CD4-positive, alpha-beta memory T cell (primary cell): ENCODE measurements at regions of chr3 and their contacts with region 1.

Region 1: GRCh38 chr3:96548073-96548472 is 266.3 kb upstream of the EPHA6 start:
- DNase-seq: no peak
- H3K4me3 ChIP-seq: no peak overlapping the region
- H3K4me3 Mint-ChIP-seq: no peak overlapping the region
- H3K27ac ChIP-seq: no peak overlapping the region
- H3K27ac Mint-ChIP-seq: no peak overlapping the region
- H3K4me1 ChIP-seq: no peaks in the 10 kb centered on the region
- H3K4me1 Mint-ChIP-seq: no peaks in the 10 kb centered on the region
- H3K27me3 ChIP-seq: no peaks in the 10 kb centered on the region
- H3K27me3 Mint-ChIP-seq: no peaks in the 10 kb centered on the region

Region 2: GRCh38 chr3:94822298-94822697 is 1725.8 kb before region 1 on chr3:
- CTCF ChIA-PET with region 1: no interaction called
- POLR2A ChIA-PET with region 1: no interaction called
- intact Hi-C with region 1: loop called (anchors 5 kb)
- DNase-seq: no peak
- H3K4me3 ChIP-seq: no peak overlapping the region
- H3K4me3 Mint-ChIP-seq: no peak overlapping the region
- H3K27ac ChIP-seq: no peak overlapping the region
- H3K27ac Mint-ChIP-seq: no peak overlapping the region
- H3K4me1 ChIP-seq: no peaks in the 10 kb centered on the region
- H3K4me1 Mint-ChIP-seq: no peaks in the 10 kb centered on the region
- H3K27me3 ChIP-seq: no peaks in the 10 kb centered on the region
- H3K27me3 Mint-ChIP-seq: no peaks in the 10 kb centered on the region

Region 3: GRCh38 chr3:96711816-96712215 is 163.7 kb after region 1 on chr3:
- CTCF ChIA-PET with region 1: no interaction called
- POLR2A ChIA-PET with region 1: no interaction called
- intact Hi-C with region 1: no loop called
- DNase-seq: no peak
- H3K4me3 ChIP-seq: no peak overlapping the region
- H3K4me3 Mint-ChIP-seq: no peak overlapping the region
- H3K27ac ChIP-seq: no peak overlapping the region
- H3K27ac Mint-ChIP-seq: no peak overlapping the region
- H3K4me1 ChIP-seq: no peaks in the 10 kb centered on the region
- H3K4me1 Mint-ChIP-seq: no peaks in the 10 kb centered on the region
- H3K27me3 ChIP-seq: no peaks in the 10 kb centered on the region
- H3K27me3 Mint-ChIP-seq: no peaks in the 10 kb centered on the region